Activated naive CD8-positive, alpha-beta T cell treated with anti-CD3 and anti-CD28 coated beads, Interleukin-2, amount 10 ng/mL, durations not matched to agents 7 days and 5 days (primary cell): ENCODE measurements at regions of chr3 and their contacts with region 1.

Region 1: GRCh38 chr3:53255775-53256703 is at the start of gene TKT:
- DNase-seq: peak; percentile 86
- ATAC-seq: peak; percentile 66
- H3K4me3 Mint-ChIP-seq: peak within 1 kb of the TSS; percentile 95
- H3K27ac Mint-ChIP-seq: peak within 1 kb of the TSS; percentile 88
- H3K4me1 Mint-ChIP-seq: peaks cover 29% of the 10 kb centered on the region
- H3K27me3 Mint-ChIP-seq: peaks cover 12% of the 10 kb centered on the region
- total RNA-seq, gene TKT: 204 to 210 TPM

Region 2: DNA sequence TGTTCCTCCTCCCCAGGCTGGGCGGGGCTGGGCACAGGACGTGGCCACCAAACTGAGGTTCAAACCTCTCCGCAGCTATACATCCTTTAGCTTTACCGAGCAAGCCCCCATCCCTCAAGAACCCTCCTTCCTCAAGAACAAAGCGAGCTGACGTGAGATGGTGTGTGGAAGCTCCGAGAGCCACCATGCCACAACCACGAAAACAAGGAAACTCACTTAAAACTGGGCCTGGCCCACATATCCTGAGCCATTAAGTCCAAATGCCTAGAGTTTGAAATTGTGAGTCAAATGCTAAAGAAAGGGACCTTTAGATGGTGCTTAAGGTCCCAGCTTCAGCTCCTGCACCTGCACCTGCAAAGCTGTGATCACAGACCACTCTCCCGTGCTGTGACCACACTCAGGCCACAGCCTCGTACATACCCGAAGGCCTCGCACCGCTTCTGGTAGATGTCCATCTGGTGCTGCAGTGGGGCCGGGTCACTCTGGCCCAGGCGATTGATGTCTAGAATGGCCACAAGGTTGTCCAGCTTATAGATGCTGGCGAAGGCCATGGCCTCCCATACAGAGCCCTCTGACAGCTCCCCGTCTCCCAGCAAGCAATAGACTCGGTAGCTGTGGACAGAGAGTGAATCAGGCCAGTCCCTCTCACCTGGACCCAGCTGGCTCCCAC is 21.3 kb before region 1 on chr3:
- POLR2A ChIA-PET with region 1: interaction called, 10 read pairs
- DNase-seq: no peak
- ATAC-seq: peak; percentile 76
- H3K4me3 Mint-ChIP-seq: peak overlapping the region; percentile 47
- H3K27ac Mint-ChIP-seq: peak overlapping the region; percentile 81
- H3K4me1 Mint-ChIP-seq: peaks cover 24% of the 10 kb centered on the region
- H3K27me3 Mint-ChIP-seq: no peaks in the 10 kb centered on the region

Region 3: GRCh38 chr3:53274938-53275605 is 19.0 kb after region 1 on chr3:
- POLR2A ChIA-PET with region 1: interaction called, 19 read pairs
- DNase-seq: no peak
- ATAC-seq: peak; percentile 96
- H3K4me3 Mint-ChIP-seq: peak overlapping the region; percentile 53
- H3K27ac Mint-ChIP-seq: peak overlapping the region; percentile 90
- H3K4me1 Mint-ChIP-seq: peaks cover 14% of the 10 kb centered on the region
- H3K27me3 Mint-ChIP-seq: peaks cover 2% of the 10 kb centered on the region

Region 4: DNA sequence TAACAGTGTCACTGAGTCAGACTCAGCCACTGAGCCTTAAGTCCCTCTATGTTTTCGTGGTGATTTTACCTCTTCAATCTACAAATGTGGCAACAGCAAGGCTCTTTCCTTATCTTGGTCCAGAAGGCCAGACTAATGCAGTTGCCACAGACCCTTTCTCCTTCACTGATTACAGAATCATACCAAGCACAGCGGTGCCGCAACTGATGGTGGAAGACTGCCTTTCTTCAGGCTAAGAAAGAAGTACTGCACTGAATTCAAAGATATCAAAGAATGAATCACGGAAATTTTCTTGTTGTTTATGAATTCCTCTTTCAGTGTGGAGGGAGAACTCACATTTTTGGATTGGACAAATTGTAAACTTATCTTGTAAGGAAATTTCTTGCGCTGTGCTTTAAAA is 72.7 kb after region 1 on chr3:
- POLR2A ChIA-PET with region 1: no interaction called
- DNase-seq: no peak
- ATAC-seq: no peak
- H3K4me3 Mint-ChIP-seq: no peak overlapping the region
- H3K27ac Mint-ChIP-seq: no peak overlapping the region
- H3K4me1 Mint-ChIP-seq: peaks cover 10% of the 10 kb centered on the region
- H3K27me3 Mint-ChIP-seq: no peaks in the 10 kb centered on the region

Region 5: GRCh38 chr3:53412953-53413352 is 156.9 kb after region 1 on chr3:
- POLR2A ChIA-PET with region 1: no interaction called
- DNase-seq: no peak
- ATAC-seq: no peak
- H3K4me3 Mint-ChIP-seq: no peak overlapping the region
- H3K27ac Mint-ChIP-seq: no peak overlapping the region
- H3K4me1 Mint-ChIP-seq: no peaks in the 10 kb centered on the region
- H3K27me3 Mint-ChIP-seq: peaks cover 4% of the 10 kb centered on the region